ENCODE measurements at regions of chr1 and their contacts with region 1.

Region 1: DNA sequence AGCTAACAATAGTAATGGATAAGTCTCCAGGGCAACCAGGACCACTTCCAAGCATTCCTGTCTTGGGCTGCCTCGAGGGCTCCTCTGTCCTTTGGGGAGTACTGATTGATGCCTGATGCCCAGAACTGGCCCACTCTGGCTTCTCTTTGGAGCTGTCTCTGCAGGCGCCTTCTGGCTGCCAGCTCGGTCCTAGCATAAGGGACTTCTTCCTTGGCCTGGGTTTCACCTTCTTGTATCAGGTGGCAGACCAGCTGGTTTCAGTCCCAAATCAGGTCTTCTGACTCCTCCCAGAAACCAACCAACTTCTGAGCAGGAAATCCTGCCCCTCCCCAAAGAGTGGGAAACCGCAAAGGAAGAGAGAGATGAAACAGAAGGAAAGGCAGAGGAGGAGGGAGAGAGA is 10.6 kb downstream of the G0S2 start:
- DNase-seq: no peak
- H3K4me3 ChIP-seq: no peak overlapping the region
- H3K27me3 ChIP-seq: peaks cover 6% of the 10 kb centered on the region; the same call in 1 of the 2 replicates
- CTCF ChIP-seq: no peak

Region 2: GRCh38 chr1:209643285-209644020 is 42.4 kb before region 1 on chr1:
- CTCF ChIA-PET with region 1: interaction called, 7 read pairs
- POLR2A ChIA-PET with region 1: interaction called, 10 read pairs
- DNase-seq: no peak
- H3K4me3 ChIP-seq: no peak overlapping the region
- H3K27me3 ChIP-seq: no peaks in the 10 kb centered on the region
- CTCF ChIP-seq: no peak

Region 3: GRCh38 chr1:209659909-209660308 is 25.9 kb before region 1 on chr1:
- CTCF ChIA-PET with region 1: no interaction called
- POLR2A ChIA-PET with region 1: no interaction called
- DNase-seq: no peak
- H3K4me3 ChIP-seq: no peak overlapping the region
- H3K27me3 ChIP-seq: peaks cover 2% of the 10 kb centered on the region
- CTCF ChIP-seq: no peak

Region 4: GRCh38 chr1:211082824-211083223 is 1397.0 kb after region 1 on chr1:
- CTCF ChIA-PET with region 1: no interaction called
- POLR2A ChIA-PET with region 1: no interaction called
- DNase-seq: no peak
- H3K4me3 ChIP-seq: no peak overlapping the region
- H3K27me3 ChIP-seq: no peaks in the 10 kb centered on the region
- CTCF ChIP-seq: no peak

Measured in BJ (cell line).